Activated CD8-positive, alpha-beta T cell treated with anti-CD3 and anti-CD28 coated beads for 36 hours (primary cell): ENCODE measurements at regions of chr6 and their contacts with region 1.

Region 1: GRCh38 chr6:16770701-16771569 is 9.7 kb upstream of the ATXN1 start:
- DNase-seq: peak; percentile 80
- ATAC-seq: peak; percentile 69
- H3K4me3 Mint-ChIP-seq: no peak overlapping the region
- H3K27ac Mint-ChIP-seq: no peak overlapping the region
- H3K4me1 Mint-ChIP-seq: peaks cover 52% of the 10 kb centered on the region
- H3K27me3 Mint-ChIP-seq: no peaks in the 10 kb centered on the region
- CTCF ChIP-seq: peak; percentile 96

Region 2: DNA sequence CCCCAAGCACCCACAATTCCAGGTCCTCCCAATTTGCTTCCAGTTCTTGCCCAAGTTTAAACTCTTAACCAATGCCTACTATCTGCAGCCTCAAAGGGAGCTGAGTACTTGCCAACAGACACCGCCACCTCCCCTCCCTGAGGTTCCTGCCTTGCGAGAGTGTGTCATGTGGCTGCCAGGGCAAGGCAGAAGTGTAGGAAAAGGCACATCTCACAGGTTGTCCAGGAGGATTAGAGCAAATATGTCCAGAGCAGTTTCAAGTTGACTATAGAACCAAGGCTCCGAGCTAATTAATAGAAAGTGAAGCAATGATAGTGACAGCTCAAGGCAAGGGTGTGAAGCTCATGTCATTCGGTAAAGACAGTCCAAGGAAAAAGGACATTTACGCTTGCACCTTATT is 137.5 kb before region 1 on chr6:
- CTCF ChIA-PET with region 1: no interaction called
- POLR2A ChIA-PET with region 1: no interaction called
- intact Hi-C with region 1: no loop called
- DNase-seq: no peak
- ATAC-seq: no peak
- H3K4me3 Mint-ChIP-seq: no peak overlapping the region
- H3K27ac Mint-ChIP-seq: no peak overlapping the region
- H3K4me1 Mint-ChIP-seq: peaks cover 33% of the 10 kb centered on the region
- H3K27me3 Mint-ChIP-seq: no peaks in the 10 kb centered on the region
- CTCF ChIP-seq: no peak

Region 3: DNA sequence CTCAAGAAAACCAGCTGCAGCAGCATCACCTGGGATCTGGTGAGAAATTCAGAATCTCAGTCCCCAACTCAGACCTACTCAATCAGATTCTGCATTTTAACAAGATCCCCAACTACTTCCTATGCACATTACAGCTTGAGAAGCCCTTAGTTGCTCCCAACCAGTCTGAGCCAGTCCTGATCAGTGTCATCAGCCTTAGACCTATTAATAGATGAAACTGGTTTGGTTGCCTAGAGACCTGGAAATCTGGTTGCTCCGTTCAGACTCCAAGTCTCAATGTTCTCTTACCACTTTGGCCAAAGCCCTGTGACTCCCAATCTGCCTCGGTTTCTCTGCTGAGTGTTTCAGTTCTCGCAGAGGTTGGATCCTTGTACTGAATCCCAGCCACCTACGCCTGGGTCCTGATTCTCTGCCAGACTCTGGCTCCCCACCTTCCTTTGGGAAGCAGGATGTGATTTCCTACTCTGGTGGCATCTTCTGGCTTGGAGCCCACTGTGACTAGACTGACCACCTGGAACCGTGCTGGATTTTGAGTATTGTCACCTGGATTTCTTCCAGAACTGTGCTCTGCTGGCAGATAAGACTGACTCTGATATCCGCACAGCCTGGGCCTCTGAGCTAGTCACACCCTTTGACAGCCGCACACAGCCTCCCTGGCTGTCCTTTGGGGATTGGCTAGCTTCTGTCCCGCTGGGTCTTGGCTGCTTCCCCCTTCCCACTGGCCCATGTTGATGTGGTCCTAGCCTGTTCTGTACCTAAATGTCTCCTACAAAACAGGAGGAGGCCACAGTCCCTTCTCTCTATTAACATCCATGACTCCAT is 10.6 kb after region 1 on chr6:
- CTCF ChIA-PET with region 1: interaction called, 18 read pairs
- POLR2A ChIA-PET with region 1: interaction called, 3 read pairs
- intact Hi-C with region 1: no loop called
- DNase-seq: no peak
- ATAC-seq: no peak
- H3K4me3 Mint-ChIP-seq: no peak overlapping the region
- H3K27ac Mint-ChIP-seq: no peak overlapping the region
- H3K4me1 Mint-ChIP-seq: no peaks in the 10 kb centered on the region
- H3K27me3 Mint-ChIP-seq: no peaks in the 10 kb centered on the region
- CTCF ChIP-seq: no peak

Region 4: GRCh38 chr6:16805243-16805950 is 34.5 kb after region 1 on chr6:
- CTCF ChIA-PET with region 1: interaction called, 10 read pairs
- POLR2A ChIA-PET with region 1: no interaction called
- intact Hi-C with region 1: no loop called
- DNase-seq: no peak
- ATAC-seq: no peak
- H3K4me3 Mint-ChIP-seq: no peak overlapping the region
- H3K27ac Mint-ChIP-seq: no peak overlapping the region
- H3K4me1 Mint-ChIP-seq: peaks cover 16% of the 10 kb centered on the region
- H3K27me3 Mint-ChIP-seq: no peaks in the 10 kb centered on the region
- CTCF ChIP-seq: no peak

Region 5: DNA sequence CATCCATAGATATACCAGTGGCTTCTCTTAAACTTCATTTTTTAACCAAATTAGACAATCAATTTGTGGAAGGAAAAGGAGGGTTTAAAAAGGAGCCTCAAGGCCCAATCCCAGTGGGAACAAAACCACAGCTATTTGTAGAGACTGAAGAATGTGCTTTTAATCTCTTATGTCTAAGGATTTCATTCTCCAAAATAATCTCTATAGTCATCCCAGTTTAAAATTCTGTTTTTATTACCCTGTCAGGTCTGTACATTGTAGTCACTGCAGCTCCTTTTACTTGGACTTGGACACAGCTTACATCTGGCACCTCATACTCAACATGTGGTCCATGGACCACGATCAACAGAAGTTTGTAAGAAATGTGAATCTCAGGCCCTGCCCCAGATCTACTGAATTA is 178.8 kb after region 1 on chr6:
- CTCF ChIA-PET with region 1: no interaction called
- POLR2A ChIA-PET with region 1: no interaction called
- intact Hi-C with region 1: loop called (anchors 5 kb)
- DNase-seq: no peak
- ATAC-seq: no peak
- H3K4me3 Mint-ChIP-seq: no peak overlapping the region
- H3K27ac Mint-ChIP-seq: no peak overlapping the region
- H3K4me1 Mint-ChIP-seq: peaks cover 42% of the 10 kb centered on the region
- H3K27me3 Mint-ChIP-seq: peaks cover 38% of the 10 kb centered on the region
- CTCF ChIP-seq: no peak

Region 6: DNA sequence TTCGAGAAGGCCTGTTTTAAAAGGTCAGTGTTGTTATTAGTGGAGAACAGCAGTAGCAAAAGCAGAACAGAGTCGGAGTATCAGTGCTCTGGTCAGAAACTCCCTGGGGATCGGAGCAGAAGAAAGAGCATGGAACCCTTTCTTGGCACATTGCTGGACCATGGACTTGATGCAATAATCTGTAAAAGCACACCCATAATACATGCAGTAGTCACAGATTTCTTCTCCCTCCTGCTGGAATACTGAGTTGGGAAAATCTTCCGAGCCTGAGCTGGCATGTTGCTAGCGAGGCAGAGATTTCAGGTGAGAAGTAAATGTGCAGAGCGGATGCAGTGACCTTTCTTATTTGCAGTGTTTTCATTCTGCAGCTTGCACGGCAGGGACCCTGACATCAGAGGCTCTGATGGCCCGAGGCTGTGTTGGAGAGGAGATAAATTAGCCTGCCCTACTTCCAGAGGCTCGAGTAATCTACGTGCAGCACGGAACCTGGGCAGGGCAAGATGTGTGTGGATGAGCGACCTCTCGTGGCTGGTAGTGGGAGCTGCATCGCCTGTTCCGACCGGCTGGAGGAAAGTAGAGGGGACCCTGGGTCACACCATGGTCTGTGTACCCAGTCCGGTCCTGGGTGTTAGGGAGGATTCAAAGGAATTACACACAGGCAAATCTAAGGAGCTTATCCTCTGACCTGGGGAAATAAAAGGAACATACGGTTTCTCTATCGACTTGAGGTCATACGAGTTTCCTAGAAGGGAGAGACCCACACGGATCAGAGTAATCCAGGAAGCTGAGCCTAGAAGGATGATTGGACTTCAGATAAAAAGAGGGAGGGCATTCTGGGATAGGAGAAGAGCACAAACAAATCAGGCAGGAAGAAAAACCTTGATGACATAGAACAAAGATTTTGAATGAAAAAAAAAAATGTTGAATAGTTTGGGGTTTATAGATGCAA is 193.9 kb after region 1 on chr6:
- CTCF ChIA-PET with region 1: interaction called, 14 read pairs
- POLR2A ChIA-PET with region 1: no interaction called
- intact Hi-C with region 1: no loop called
- DNase-seq: peak; percentile 82
- ATAC-seq: peak; percentile 98
- H3K4me3 Mint-ChIP-seq: no peak overlapping the region
- H3K27ac Mint-ChIP-seq: no peak overlapping the region
- H3K4me1 Mint-ChIP-seq: peaks cover 16% of the 10 kb centered on the region
- H3K27me3 Mint-ChIP-seq: peaks cover 21% of the 10 kb centered on the region
- CTCF ChIP-seq: peak; percentile 77